Activated CD4-positive, alpha-beta T cell treated with anti-CD3 and anti-CD28 coated beads for 36 hours (primary cell): ENCODE measurements at regions of chr3 and their contacts with region 1.

Region 1: GRCh38 chr3:184298759-184299496 is at the start of gene PSMD2:
- DNase-seq: peak; percentile 99
- ATAC-seq: peak; percentile 96
- H3K4me3 Mint-ChIP-seq: peak within 1 kb of the TSS; percentile 84
- H3K27ac Mint-ChIP-seq: peak within 1 kb of the TSS; percentile 81
- H3K4me1 Mint-ChIP-seq: peaks cover 19% of the 10 kb centered on the region
- H3K27me3 Mint-ChIP-seq: no peaks in the 10 kb centered on the region
- total RNA-seq, gene PSMD2: 207 to 236 TPM

Region 2: DNA sequence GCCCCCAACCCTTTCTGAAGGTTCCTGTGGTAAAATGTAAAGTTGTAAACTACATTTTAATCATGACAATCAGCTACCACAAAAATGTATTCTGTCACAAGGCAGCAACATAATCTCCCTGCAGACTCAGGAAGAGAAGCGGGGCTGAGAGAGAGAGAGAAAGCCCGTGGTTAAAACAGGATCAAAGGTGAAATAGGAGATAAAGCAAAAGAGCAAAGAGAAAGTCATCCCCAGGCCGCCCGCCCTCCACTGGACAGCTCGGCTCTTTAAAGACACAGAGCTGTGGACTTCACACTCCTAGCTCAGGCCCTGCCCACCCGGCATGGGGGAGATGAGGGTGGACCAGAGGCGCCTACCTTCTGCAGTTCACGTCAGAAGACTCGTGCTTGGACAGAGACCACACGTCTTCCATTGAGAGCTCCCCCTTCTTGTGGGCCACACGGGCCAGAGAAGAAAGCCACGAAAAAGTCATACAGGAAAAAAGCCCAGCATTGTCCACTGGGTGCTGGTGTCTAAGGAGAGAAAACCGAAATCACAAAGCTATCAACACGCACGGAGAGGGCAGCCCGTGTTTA is 310.6 kb before region 1 on chr3:
- CTCF ChIA-PET with region 1: no interaction called
- POLR2A ChIA-PET with region 1: no interaction called
- intact Hi-C with region 1: no loop called
- DNase-seq: no peak
- ATAC-seq: no peak
- H3K4me3 Mint-ChIP-seq: no peak overlapping the region
- H3K27ac Mint-ChIP-seq: no peak overlapping the region
- H3K4me1 Mint-ChIP-seq: no peaks in the 10 kb centered on the region
- H3K27me3 Mint-ChIP-seq: no peaks in the 10 kb centered on the region

Region 3: GRCh38 chr3:184017672-184018423 is 281.1 kb before region 1 on chr3 and contains the start of gene ABCC5:
- CTCF ChIA-PET with region 1: no interaction called
- POLR2A ChIA-PET with region 1: no interaction called
- intact Hi-C with region 1: loop called in 1 of 2 experiments (anchors 1 kb)
- DNase-seq: peak; percentile 91
- ATAC-seq: peak; percentile 96
- H3K4me3 Mint-ChIP-seq: peak within 1 kb of the TSS; percentile 98
- H3K27ac Mint-ChIP-seq: peak within 1 kb of the TSS; percentile 85
- H3K4me1 Mint-ChIP-seq: peaks cover 17% of the 10 kb centered on the region
- H3K27me3 Mint-ChIP-seq: peaks cover 9% of the 10 kb centered on the region
- total RNA-seq, gene ABCC5: 12.5 to 15.8 TPM

Region 4: DNA sequence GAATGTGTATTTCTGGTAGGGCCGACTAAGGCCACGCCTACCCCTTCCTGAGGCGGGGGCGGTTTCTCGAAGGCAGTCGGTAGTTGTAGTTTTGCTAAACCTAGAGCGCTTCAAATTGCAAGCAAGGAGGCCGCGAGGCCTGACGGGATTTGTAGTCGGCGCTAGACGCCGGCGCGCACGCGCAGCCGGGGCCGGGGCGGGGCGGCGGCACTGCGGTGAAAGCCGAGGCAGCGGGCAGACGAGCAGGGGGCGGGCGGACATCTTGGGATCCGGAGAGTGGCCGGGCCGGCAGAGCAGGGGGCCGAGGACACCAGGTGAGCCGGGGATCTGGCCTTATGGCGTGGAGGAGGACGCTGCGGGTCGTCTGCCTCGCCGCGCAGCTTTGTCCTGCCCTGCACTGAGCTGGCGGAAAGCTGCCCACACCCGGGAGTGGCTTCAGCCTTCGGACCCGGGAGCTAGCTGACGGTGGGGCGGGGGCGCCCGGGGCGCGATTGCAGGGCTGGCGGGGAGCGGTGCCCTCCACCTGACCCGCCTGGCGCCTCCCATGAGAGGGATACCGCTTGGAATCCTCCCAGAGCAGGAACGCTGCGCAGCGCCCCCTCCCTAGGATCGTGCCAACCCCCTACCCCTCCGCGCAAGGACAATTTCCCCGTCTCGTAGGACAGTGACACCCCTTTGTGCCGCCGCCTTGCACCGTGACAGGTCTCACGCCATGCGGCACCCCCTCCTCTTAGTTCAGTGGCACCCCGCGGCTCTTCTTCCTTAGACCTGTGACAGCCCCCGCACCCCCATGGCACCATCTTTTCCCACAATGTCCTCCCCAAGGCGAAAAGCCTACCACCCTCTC is 124.1 kb before region 1 on chr3 and contains the start of gene AP2M1:
- CTCF ChIA-PET with region 1: no interaction called
- POLR2A ChIA-PET with region 1: no interaction called
- intact Hi-C with region 1: loop called (anchors 1 kb)
- DNase-seq: peak; percentile 98
- ATAC-seq: peak; percentile 97
- H3K4me3 Mint-ChIP-seq: peak within 1 kb of the TSS; percentile 95
- H3K27ac Mint-ChIP-seq: peak within 1 kb of the TSS; percentile 89
- H3K4me1 Mint-ChIP-seq: peaks cover 23% of the 10 kb centered on the region
- H3K27me3 Mint-ChIP-seq: no peaks in the 10 kb centered on the region
- total RNA-seq, gene AP2M1: 192 to 204 TPM

Region 5: DNA sequence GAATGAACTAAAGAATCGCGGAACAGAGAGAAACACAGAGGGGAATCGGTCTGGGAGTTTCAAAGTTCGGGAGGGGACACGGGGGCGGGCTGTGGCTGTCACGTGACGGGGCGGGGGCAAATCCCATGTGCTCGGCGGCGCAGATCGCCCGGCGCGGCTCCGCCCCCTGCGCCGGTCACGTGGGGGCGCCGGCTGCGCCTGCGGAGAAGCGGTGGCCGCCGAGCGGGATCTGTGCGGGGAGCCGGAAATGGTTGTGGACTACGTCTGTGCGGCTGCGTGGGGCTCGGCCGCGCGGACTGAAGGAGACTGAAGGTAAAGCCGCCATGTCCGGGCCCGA is 15.4 kb after region 1 on chr3 and contains the start of gene EIF4G1:
- CTCF ChIA-PET with region 1: interaction called, 3 read pairs
- POLR2A ChIA-PET with region 1: interaction called, 4 read pairs
- intact Hi-C with region 1: loop called (anchors 1 kb)
- DNase-seq: peak; percentile 96
- ATAC-seq: peak; percentile 89
- H3K4me3 Mint-ChIP-seq: peak within 1 kb of the TSS; percentile 84
- H3K27ac Mint-ChIP-seq: peak within 1 kb of the TSS; percentile 90
- H3K4me1 Mint-ChIP-seq: peaks cover 29% of the 10 kb centered on the region
- H3K27me3 Mint-ChIP-seq: no peaks in the 10 kb centered on the region
- total RNA-seq, gene EIF4G1: 479 to 556 TPM

Region 6: GRCh38 chr3:184362668-184363540 is 64.0 kb after region 1 on chr3:
- CTCF ChIA-PET with region 1: interaction called, 4 read pairs
- POLR2A ChIA-PET with region 1: no interaction called
- intact Hi-C with region 1: loop called (anchors 1 to 2 kb)
- DNase-seq: peak; percentile 97
- ATAC-seq: peak; percentile 91
- H3K4me3 Mint-ChIP-seq: peak overlapping the region; percentile 98
- H3K27ac Mint-ChIP-seq: peak overlapping the region; percentile 98
- H3K4me1 Mint-ChIP-seq: peaks cover 30% of the 10 kb centered on the region
- H3K27me3 Mint-ChIP-seq: no peaks in the 10 kb centered on the region